ENCODE measurements at regions of chr19 and their contacts with region 1.

Region 1: GRCh38 chr19:11482384-11483050 is 1.7 kb upstream of the ELAVL3 start:
- DNase-seq: peak; percentile 89
- H3K4me3 Mint-ChIP-seq: peak overlapping the region; percentile 54
- H3K27ac Mint-ChIP-seq: peak overlapping the region; percentile 29
- H3K4me1 Mint-ChIP-seq: peaks cover 33% of the 10 kb centered on the region
- H3K27me3 Mint-ChIP-seq: peaks cover 56% of the 10 kb centered on the region

Region 2: GRCh38 chr19:11293433-11294389 is 188.8 kb before region 1 on chr19:
- CTCF ChIA-PET with region 1: interaction called, 19 read pairs
- DNase-seq: peak; percentile 86
- H3K4me3 Mint-ChIP-seq: peak overlapping the region; percentile 48
- H3K27ac Mint-ChIP-seq: no peak overlapping the region
- H3K4me1 Mint-ChIP-seq: peaks cover 10% of the 10 kb centered on the region
- H3K27me3 Mint-ChIP-seq: peaks cover 83% of the 10 kb centered on the region

Region 3: DNA sequence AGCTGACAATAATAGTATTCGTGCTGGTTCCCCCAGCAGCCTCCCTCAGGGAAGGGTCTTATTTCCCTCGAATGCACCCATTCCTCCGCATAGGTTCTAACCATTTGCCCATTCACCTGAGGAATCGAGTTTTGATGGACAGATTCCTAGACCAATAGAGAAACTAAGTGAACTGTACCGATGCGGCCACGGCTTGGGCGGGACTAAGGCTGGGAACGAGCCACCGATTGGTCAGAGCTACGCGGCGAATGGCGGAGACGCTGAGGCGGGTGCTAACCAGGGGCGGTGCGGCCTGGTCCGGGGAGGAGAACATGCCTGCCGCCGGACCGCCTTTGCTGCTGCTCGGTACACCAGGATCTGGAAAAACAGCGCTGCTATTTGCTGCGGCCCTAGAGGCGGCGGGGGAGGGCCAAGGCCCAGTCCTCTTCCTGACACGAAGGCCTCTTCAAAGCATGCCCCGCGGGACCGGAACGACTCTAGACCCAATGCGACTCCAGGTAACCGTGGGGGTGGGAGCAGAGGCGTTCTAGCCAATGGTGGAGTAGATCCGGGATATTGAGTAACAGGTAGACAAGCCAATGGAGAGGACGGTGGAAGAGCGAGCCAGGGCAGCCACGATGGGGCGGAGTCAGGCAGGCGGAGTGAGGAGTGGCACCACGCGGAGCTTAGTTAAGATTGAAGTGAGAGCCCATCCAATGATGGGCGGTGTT is 107.9 kb before region 1 on chr19 and contains the start of gene SWSAP1:
- CTCF ChIA-PET with region 1: interaction called, 11 read pairs
- DNase-seq: peak; percentile 98
- H3K4me3 Mint-ChIP-seq: no peak within 1 kb of the TSS
- H3K27ac Mint-ChIP-seq: no peak within 1 kb of the TSS
- H3K4me1 Mint-ChIP-seq: peaks cover 37% of the 10 kb centered on the region
- H3K27me3 Mint-ChIP-seq: no peaks in the 10 kb centered on the region

Region 4: GRCh38 chr19:11381535-11382369 is 100.8 kb before region 1 on chr19:
- CTCF ChIA-PET with region 1: interaction called, 13 read pairs
- DNase-seq: peak; percentile 89
- H3K4me3 Mint-ChIP-seq: peak overlapping the region; percentile 81
- H3K27ac Mint-ChIP-seq: peak overlapping the region; percentile 99
- H3K4me1 Mint-ChIP-seq: peaks cover 51% of the 10 kb centered on the region
- H3K27me3 Mint-ChIP-seq: peaks cover 50% of the 10 kb centered on the region

Region 5: GRCh38 chr19:11496391-11497163 is 14.1 kb after region 1 on chr19:
- CTCF ChIA-PET with region 1: interaction called, 10 read pairs
- DNase-seq: peak; percentile 72
- H3K4me3 Mint-ChIP-seq: no peak overlapping the region
- H3K27ac Mint-ChIP-seq: no peak overlapping the region
- H3K4me1 Mint-ChIP-seq: no peaks in the 10 kb centered on the region
- H3K27me3 Mint-ChIP-seq: no peaks in the 10 kb centered on the region

Region 6: GRCh38 chr19:11528551-11529341 is 46.2 kb after region 1 on chr19 and contains the start of gene ECSIT:
- CTCF ChIA-PET with region 1: no interaction called
- DNase-seq: peak; percentile 95
- H3K4me3 Mint-ChIP-seq: peak within 1 kb of the TSS; percentile 84
- H3K27ac Mint-ChIP-seq: peak within 1 kb of the TSS; percentile 88
- H3K4me1 Mint-ChIP-seq: peaks cover 19% of the 10 kb centered on the region
- H3K27me3 Mint-ChIP-seq: peaks cover under 1% of the 10 kb centered on the region

Region 7: GRCh38 chr19:11798391-11799330 is 316.1 kb after region 1 on chr19 and contains the start of gene ZNF491:
- CTCF ChIA-PET with region 1: no interaction called
- DNase-seq: peak; percentile 90
- H3K4me3 Mint-ChIP-seq: peak within 1 kb of the TSS; percentile 84
- H3K27ac Mint-ChIP-seq: peak within 1 kb of the TSS; percentile 76
- H3K4me1 Mint-ChIP-seq: peaks cover 17% of the 10 kb centered on the region
- H3K27me3 Mint-ChIP-seq: peaks cover 21% of the 10 kb centered on the region